Heart left ventricle (tissue), 16 donors: ENCODE measurements at regions of chr9 and their contacts with region 1.

Region 1: GRCh38 chr9:92877531-92878430 is at the start of gene ZNF484:
- DNase-seq: peak; percentile 96 to 99 (median 98)
- ATAC-seq: peak; percentile 99 to 100 (median 100)
- H3K4me3 ChIP-seq: peak within 1 kb of the TSS; percentile 42 to 95 (median 66)
- H3K27ac ChIP-seq: peak within 1 kb of the TSS in 11 of 12 donors; percentile 15 to 87 (median 80)
- H3K4me1 ChIP-seq: peaks cover 0 to 20% (median 10%) of the 10 kb centered on the region in 12 donors
- H3K27me3 ChIP-seq: no peaks in the 10 kb centered on the region
- CTCF ChIP-seq: no peak
- POLR2A ChIP-seq: peak in 1 of 2 donors; percentile 44
- total RNA-seq, gene ZNF484: 4.0 to 8.9 (median 6.5) TPM

Region 2: GRCh38 chr9:92954049-92954861 is 76.5 kb after region 1 on chr9:
- intact Hi-C with region 1: loop called in 1 of 10 experiments (anchors 10 kb)
- DNase-seq: peak in 4 of 5 donors; percentile 71 to 84 (median 75)
- ATAC-seq: peak; percentile 48 to 94 (median 76)
- H3K4me3 ChIP-seq: peak overlapping the region in 2 of 12 donors; percentile 6 to 35
- H3K27ac ChIP-seq: peak overlapping the region; percentile 44 to 80 (median 75)
- H3K4me1 ChIP-seq: peaks cover 0 to 28% (median 8%) of the 10 kb centered on the region in 12 donors
- H3K27me3 ChIP-seq: peaks cover 0 to 53% (median 8%) of the 10 kb centered on the region in 9 donors
- CTCF ChIP-seq: no peak
- POLR2A ChIP-seq: peak in 1 of 2 donors; percentile 41